Esophagus muscularis mucosa (tissue), 4 donors: ENCODE measurements at regions of chr20 and their contacts with region 1.

Region 1: GRCh38 chr20:56072165-56072564 is 66.8 kb upstream of the CBLN4 start:
- DNase-seq: no peak
- H3K4me3 ChIP-seq: no peak overlapping the region
- H3K27ac ChIP-seq: no peak overlapping the region
- H3K4me1 ChIP-seq: no peaks in the 10 kb centered on the region
- H3K27me3 ChIP-seq: peaks cover 0 to 3% (median 0%) of the 10 kb centered on the region in 4 donors
- CTCF ChIP-seq: no peak
- EP300 ChIP-seq: no peak
- POLR2A ChIP-seq: no peak

Region 2: DNA sequence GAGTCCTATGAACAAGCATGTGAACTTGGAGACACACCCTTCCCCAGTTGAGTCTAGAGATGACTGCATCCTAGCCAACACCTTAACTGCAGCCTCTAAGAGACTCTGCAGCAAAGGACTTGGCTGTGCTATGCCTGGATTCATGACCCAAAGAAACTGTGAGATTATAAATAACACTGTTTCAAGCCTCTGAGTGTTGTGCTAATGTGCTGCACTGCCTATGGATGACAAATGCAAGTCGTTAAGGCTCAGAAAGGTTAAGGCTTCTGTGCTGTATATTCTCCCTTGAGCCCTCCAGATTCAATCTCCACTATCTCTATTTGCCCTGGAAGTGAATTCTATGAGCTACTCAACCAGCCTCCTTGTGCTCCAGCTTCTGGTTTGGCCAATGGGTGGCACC is 49.7 kb after region 1 on chr20:
- intact Hi-C with region 1: loop called (anchors 5 kb)
- DNase-seq: no peak
- H3K4me3 ChIP-seq: no peak overlapping the region
- H3K27ac ChIP-seq: no peak overlapping the region
- H3K4me1 ChIP-seq: no peaks in the 10 kb centered on the region
- H3K27me3 ChIP-seq: no peaks in the 10 kb centered on the region
- CTCF ChIP-seq: no peak
- EP300 ChIP-seq: no peak
- POLR2A ChIP-seq: no peak